Caco-2 (cell line): ENCODE measurements at regions of chr16 and their contacts with region 1.

Region 1: GRCh38 chr16:63497408-63497807 is 1461.2 kb upstream of the CDH8 start:
- DNase-seq: no peak
- H3K4me3 ChIP-seq: no peak overlapping the region
- H3K4me3 Mint-ChIP-seq: no peak overlapping the region
- H3K27ac Mint-ChIP-seq: no peak overlapping the region
- H3K4me1 ChIP-seq: no peaks in the 10 kb centered on the region
- H3K4me1 Mint-ChIP-seq: no peaks in the 10 kb centered on the region
- H3K27me3 ChIP-seq: no peaks in the 10 kb centered on the region
- H3K27me3 Mint-ChIP-seq: no peaks in the 10 kb centered on the region
- CTCF ChIP-seq: no peak

Region 2: DNA sequence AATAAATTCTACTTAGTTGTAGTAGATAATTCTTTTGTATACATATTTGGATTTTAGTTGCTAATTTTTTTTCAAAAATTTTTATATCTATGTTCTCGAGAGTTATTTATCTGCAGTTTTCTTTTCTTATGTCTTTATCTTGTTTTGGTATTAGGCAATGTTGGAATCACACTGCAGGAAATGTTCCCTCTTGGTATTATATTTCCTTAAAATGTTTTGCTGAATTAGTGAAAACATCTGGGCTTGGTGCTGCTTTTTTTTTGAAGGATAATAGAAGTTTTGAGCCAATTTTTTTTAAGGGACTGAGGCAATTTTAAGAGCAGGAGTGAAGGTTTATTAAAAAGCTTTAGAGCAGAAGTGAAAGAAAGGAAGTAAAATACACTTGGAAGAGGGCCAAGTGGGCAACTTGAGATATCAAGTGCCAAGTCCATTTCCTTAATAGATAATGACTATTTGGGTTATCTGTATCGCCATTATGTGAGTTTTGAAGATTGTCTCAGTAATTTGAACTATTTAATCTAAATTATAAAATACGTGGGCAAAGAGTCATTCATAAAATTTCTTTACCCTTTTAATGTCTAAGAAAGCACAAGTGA is 71.0 kb before region 1 on chr16:
- CTCF ChIA-PET with region 1: no interaction called
- POLR2A ChIA-PET with region 1: no interaction called
- intact Hi-C with region 1: loop called (anchors 10 kb)
- DNase-seq: no peak
- H3K4me3 ChIP-seq: no peak overlapping the region
- H3K4me3 Mint-ChIP-seq: no peak overlapping the region
- H3K27ac Mint-ChIP-seq: no peak overlapping the region
- H3K4me1 ChIP-seq: no peaks in the 10 kb centered on the region
- H3K4me1 Mint-ChIP-seq: no peaks in the 10 kb centered on the region
- H3K27me3 ChIP-seq: no peaks in the 10 kb centered on the region
- H3K27me3 Mint-ChIP-seq: peaks cover 6% of the 10 kb centered on the region
- CTCF ChIP-seq: no peak

Region 3: DNA sequence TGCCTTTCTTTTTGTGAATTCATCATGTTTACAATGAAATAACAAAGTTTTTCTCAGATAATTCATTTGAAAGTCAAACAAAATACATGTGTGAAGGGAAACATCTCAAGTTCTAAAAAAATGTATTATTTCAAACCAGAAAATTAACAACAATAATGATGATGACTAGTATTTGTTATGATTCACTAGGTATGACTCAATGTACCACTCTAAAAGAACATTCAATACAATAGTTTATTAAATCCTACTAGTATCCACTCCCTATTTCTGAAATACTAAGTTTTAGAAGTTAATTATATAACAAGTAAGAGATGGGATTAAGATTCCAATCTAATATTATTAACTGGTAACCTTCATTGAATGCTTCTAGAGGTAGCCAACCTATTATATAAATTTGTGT is 16.3 kb before region 1 on chr16:
- CTCF ChIA-PET with region 1: no interaction called
- POLR2A ChIA-PET with region 1: no interaction called
- intact Hi-C with region 1: no loop called
- DNase-seq: no peak
- H3K4me3 ChIP-seq: no peak overlapping the region
- H3K4me3 Mint-ChIP-seq: no peak overlapping the region
- H3K27ac Mint-ChIP-seq: no peak overlapping the region
- H3K4me1 ChIP-seq: no peaks in the 10 kb centered on the region
- H3K4me1 Mint-ChIP-seq: no peaks in the 10 kb centered on the region
- H3K27me3 ChIP-seq: no peaks in the 10 kb centered on the region
- H3K27me3 Mint-ChIP-seq: no peaks in the 10 kb centered on the region
- CTCF ChIP-seq: no peak